PC-3 (cell line): ENCODE measurements at regions of chr1 and their contacts with region 1.

Region 1: GRCh38 chr1:59446257-59446901 is 149.5 kb downstream of the FGGY start:
- DNase-seq: peak; percentile 79
- ATAC-seq: peak; percentile 57
- H3K4me3 ChIP-seq: no peak overlapping the region
- H3K27ac ChIP-seq: peak overlapping the region; percentile 48
- H3K4me1 ChIP-seq: peaks cover 56% of the 10 kb centered on the region
- H3K27me3 ChIP-seq: no peaks in the 10 kb centered on the region
- CTCF ChIP-seq: no peak

Region 2: GRCh38 chr1:59477286-59477685 is 30.9 kb after region 1 on chr1:
- CTCF ChIA-PET with region 1: interaction called, 3 read pairs
- POLR2A ChIA-PET with region 1: no interaction called
- intact Hi-C with region 1: loop called (anchors 2 kb)
- DNase-seq: peak; percentile 87
- ATAC-seq: peak; percentile 84
- H3K4me3 ChIP-seq: no peak overlapping the region
- H3K27ac ChIP-seq: peak overlapping the region; percentile 54
- H3K4me1 ChIP-seq: peaks cover 28% of the 10 kb centered on the region
- H3K27me3 ChIP-seq: no peaks in the 10 kb centered on the region
- CTCF ChIP-seq: no peak

Region 3: GRCh38 chr1:59543211-59543668 is 96.9 kb after region 1 on chr1:
- CTCF ChIA-PET with region 1: no interaction called
- POLR2A ChIA-PET with region 1: no interaction called
- intact Hi-C with region 1: no loop called
- DNase-seq: no peak
- ATAC-seq: no peak
- H3K4me3 ChIP-seq: no peak overlapping the region
- H3K27ac ChIP-seq: no peak overlapping the region
- H3K4me1 ChIP-seq: no peaks in the 10 kb centered on the region; the same call in 1 of the 2 replicates
- H3K27me3 ChIP-seq: no peaks in the 10 kb centered on the region
- CTCF ChIP-seq: no peak